PC-9 (cell line): ENCODE measurements at regions of chr12 and their contacts with region 1.

Region 1: GRCh38 chr12:66438593-66438992 is 136.3 kb downstream of the HELB start:
- DNase-seq: peak; percentile 26 to 38
- H3K4me3 ChIP-seq: no peak overlapping the region
- H3K27ac ChIP-seq: no peak overlapping the region
- H3K4me1 ChIP-seq: 0 out of 2 replicates have a peak, but pooled peaks cover 4% of the 10 kb centered on the region
- H3K27me3 ChIP-seq: no peaks in the 10 kb centered on the region
- CTCF ChIP-seq: no peak

Region 2: GRCh38 chr12:65977384-65977783 is 461.2 kb before region 1 on chr12:
- CTCF ChIA-PET with region 1: no interaction called
- POLR2A ChIA-PET with region 1: no interaction called
- intact Hi-C with region 1: no loop called
- DNase-seq: no peak
- H3K4me3 ChIP-seq: no peak overlapping the region
- H3K27ac ChIP-seq: no peak overlapping the region
- H3K4me1 ChIP-seq: no peaks in the 10 kb centered on the region
- H3K27me3 ChIP-seq: no peaks in the 10 kb centered on the region
- CTCF ChIP-seq: no peak

Region 3: DNA sequence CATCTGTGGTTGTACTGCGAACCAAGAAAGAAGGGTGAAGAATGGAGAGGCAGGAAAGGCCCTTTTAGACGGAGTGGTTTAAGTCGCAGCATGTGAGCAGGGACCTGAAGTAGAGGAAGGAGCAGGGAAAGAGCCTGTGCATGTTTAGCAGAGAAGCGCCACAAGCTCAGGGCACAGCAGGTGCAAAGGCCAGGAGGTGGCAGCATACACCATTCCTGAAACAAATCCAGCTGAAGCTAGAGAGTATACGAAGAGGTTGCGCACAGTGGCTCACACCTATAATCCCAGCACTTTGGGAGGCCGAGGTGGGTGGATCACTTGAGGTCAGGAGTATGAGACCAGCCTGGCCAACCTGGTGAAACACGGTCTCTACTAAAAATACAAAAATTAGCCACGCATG is 86.4 kb before region 1 on chr12:
- CTCF ChIA-PET with region 1: no interaction called
- POLR2A ChIA-PET with region 1: interaction called, 11 read pairs
- intact Hi-C with region 1: no loop called
- DNase-seq: peak in 1 of 2 experiments; percentile 18
- H3K4me3 ChIP-seq: no peak overlapping the region
- H3K27ac ChIP-seq: no peak overlapping the region
- H3K4me1 ChIP-seq: no peaks in the 10 kb centered on the region
- H3K27me3 ChIP-seq: no peaks in the 10 kb centered on the region
- CTCF ChIP-seq: peak; percentile 42; the same call in 1 of the 2 replicates

Region 4: GRCh38 chr12:66467932-66468331 is 29.3 kb after region 1 on chr12:
- CTCF ChIA-PET with region 1: no interaction called
- POLR2A ChIA-PET with region 1: interaction called, 10 read pairs
- intact Hi-C with region 1: no loop called
- DNase-seq: no peak
- H3K4me3 ChIP-seq: no peak overlapping the region
- H3K27ac ChIP-seq: no peak overlapping the region
- H3K4me1 ChIP-seq: no peaks in the 10 kb centered on the region
- H3K27me3 ChIP-seq: no peaks in the 10 kb centered on the region
- CTCF ChIP-seq: no peak